Left cardiac atrium (tissue), 4 donors: ENCODE measurements at regions of chr1 and their contacts with region 1.

Region 1: DNA sequence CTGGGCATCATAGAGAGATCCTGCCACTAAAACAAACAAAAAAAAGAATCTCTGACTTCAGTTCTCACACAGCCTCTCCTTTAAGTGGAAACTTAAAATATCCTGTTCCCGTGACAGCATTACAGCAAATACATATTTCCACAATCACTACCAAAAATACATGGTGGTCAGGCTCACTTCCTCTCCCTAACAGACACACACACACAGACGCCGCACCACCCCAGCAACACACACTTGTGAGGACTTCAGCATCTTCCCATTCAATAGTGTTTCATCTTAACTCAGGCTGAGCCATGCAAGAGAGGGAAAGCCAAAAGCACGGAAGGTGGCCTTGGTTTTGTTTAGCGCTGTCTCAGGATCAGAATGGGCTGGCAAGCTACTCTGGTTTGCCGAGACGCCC is 21.9 kb downstream of the KIAA1614 start:
- DNase-seq: no peak
- ATAC-seq: no peak

Region 2: GRCh38 chr1:180560868-180561600 is 373.5 kb before region 1 on chr1:
- intact Hi-C with region 1: no loop called
- DNase-seq: no peak
- ATAC-seq: peak; percentile 38 to 75

Region 3: GRCh38 chr1:180975551-180975950 is 41.0 kb after region 1 on chr1:
- intact Hi-C with region 1: loop called in 1 of 2 experiments (anchors 5 kb)
- DNase-seq: no peak
- ATAC-seq: peak in 1 of 2 donors; percentile 75

Region 4: DNA sequence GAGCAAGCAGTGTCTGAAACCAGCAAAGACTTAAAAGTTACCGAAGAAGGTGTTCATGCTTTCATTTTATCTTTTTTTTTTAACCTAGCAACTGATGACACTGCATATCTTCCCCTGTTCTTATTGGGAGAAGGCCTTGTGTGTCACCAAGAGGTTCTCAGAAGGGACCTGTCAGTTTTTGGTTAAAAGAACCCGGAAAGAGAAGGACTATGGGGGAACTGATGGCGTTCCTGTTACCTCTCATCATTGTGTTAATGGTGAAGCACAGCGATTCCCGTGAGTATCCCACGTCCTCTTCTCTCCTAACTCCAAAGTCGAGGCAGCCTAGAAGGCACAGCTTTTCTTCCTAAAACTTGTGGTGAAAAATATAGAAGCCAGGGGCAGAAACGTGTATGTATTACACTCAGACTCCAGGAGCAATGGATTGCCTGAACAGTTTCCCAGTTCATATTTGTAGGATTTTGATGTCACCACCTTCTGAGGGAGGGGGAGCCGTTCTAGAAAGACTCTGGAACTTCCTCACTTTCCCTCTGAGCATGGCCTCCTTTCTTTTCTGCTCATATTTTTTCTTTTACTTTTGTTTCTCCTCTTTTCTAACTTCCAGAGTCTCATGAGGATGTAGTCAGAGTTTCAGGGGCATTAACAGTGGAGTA is 99.4 kb after region 1 on chr1 and contains the start of gene MR1:
- intact Hi-C with region 1: no loop called
- DNase-seq: no peak
- ATAC-seq: peak; percentile 95
- total RNA-seq, gene MR1: 10.5 to 12.0 TPM

Region 5: GRCh38 chr1:181057079-181057478 is 122.5 kb after region 1 on chr1:
- intact Hi-C with region 1: no loop called
- DNase-seq: no peak
- ATAC-seq: peak in 1 of 2 donors; percentile 21